CD4-positive, alpha-beta memory T cell (primary cell): ENCODE measurements at regions of chr20 and their contacts with region 1.

Region 1: DNA sequence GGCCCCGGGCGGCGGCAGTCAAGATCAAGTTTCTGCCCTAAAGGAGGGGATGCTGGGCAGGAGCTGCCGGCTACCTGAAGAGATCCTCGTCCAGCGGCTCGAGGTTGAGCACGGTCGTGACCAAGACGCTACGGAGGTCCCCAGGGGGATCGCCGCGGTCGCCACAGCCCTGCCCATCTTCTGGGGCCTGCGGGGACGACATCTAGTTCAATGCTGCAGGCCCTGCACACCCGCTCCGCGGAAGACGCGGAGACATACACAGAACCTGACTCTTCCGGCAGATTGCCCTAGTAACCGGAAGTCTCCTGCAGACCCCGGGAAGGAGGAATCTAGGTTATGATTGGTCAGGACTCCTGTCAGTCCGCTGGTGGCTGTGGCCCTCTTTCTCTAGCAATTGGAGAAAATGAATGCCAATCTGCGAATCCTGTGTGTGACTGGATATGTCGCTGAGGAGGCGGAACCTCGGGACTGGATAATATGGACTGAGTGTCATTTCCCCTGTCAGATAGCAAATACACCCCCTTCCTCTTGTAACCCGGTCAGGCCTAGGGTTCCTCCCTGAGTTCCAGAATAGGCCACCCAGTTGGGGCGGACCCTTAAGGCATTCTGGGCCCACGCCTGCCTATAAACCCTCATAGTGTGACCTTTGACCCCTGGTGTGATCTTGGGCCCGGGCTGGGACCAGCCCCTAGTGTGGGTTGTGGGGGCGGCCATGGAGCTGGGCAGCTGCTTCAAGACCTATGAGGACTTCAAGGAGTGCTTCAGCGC is at the starts of genes ACOT8 and ZSWIM3:
- DNase-seq: peak; percentile 97 to 99 (median 99)
- H3K4me3 ChIP-seq: peak within 1 kb of the TSS; percentile 73 to 78
- H3K4me3 Mint-ChIP-seq: peak within 1 kb of the TSS; percentile 86 to 98 (median 95)
- H3K27ac ChIP-seq: peak within 1 kb of the TSS; percentile 76
- H3K27ac Mint-ChIP-seq: peak within 1 kb of the TSS; percentile 84 to 99 (median 98)
- H3K4me1 ChIP-seq: peaks cover 35% of the 10 kb centered on the region
- H3K4me1 Mint-ChIP-seq: peaks cover 25 to 66% (median 39%) of the 10 kb centered on the region in 4 donors
- H3K27me3 ChIP-seq: no peaks in the 10 kb centered on the region
- H3K27me3 Mint-ChIP-seq: no peaks in the 10 kb centered on the region
- total RNA-seq, gene ACOT8: 30.6 to 33.4 TPM
- total RNA-seq, gene ZSWIM3: 6.7 to 7.1 TPM

Region 2: DNA sequence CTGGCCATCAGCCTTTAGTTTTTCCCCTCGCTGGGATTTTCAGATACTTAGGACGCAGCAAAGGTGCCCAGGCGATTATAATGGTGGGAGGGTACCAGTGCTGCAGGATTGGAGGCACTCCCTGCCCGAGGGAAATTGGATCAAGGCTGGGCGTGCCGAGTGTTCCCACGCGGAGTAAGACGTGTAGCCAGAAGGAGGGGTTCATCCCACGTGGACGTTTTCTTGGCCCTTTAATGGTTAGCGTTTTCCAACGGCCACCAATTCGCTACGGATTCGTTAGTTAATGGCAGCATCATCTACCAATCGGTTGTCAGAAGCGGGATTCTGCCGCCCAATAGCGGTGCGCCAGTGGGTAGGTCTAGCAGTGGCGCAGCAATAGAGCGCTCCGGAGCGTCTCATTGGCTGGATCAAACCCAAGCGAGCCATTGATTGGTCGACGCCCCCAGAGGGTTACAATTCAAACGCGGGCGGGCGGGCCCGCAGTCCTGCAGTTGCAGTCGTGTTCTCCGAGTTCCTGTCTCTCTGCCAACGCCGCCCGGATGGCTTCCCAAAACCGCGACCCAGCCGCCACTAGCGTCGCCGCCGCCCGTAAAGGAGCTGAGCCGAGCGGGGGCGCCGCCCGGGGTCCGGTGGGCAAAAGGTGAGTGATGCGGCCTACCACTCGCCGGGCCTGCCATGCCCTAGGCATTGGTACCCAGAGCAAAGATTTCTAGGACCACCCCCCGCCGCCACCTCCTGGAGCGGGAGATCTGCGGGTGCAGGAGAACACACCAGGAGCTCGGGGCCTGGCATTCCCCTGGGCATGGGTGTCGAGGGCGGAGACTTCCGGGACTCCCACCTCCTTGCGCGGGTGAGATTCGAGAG is 44.9 kb before region 1 on chr20 and contains the start of gene UBE2C:
- CTCF ChIA-PET with region 1: no interaction called
- POLR2A ChIA-PET with region 1: interaction called, 4 read pairs
- intact Hi-C with region 1: loop called (anchors 1 kb)
- DNase-seq: peak; percentile 92 to 96 (median 94)
- H3K4me3 ChIP-seq: peak within 1 kb of the TSS; percentile 37 to 68
- H3K4me3 Mint-ChIP-seq: peak within 1 kb of the TSS; percentile 82 to 92 (median 86)
- H3K27ac ChIP-seq: peak within 1 kb of the TSS; percentile 44
- H3K27ac Mint-ChIP-seq: peak within 1 kb of the TSS; percentile 53 to 89 (median 70)
- H3K4me1 ChIP-seq: peaks cover 15% of the 10 kb centered on the region
- H3K4me1 Mint-ChIP-seq: peaks cover 7 to 23% (median 14%) of the 10 kb centered on the region in 4 donors
- H3K27me3 ChIP-seq: no peaks in the 10 kb centered on the region
- H3K27me3 Mint-ChIP-seq: no peaks in the 10 kb centered on the region
- total RNA-seq, gene UBE2C: 0.55 to 0.61 TPM

Region 3: GRCh38 chr20:45823949-45824835 is 33.1 kb before region 1 on chr20:
- CTCF ChIA-PET with region 1: interaction called, 3 read pairs
- POLR2A ChIA-PET with region 1: interaction called, 5 read pairs
- intact Hi-C with region 1: loop called (anchors 1 kb)
- DNase-seq: peak; percentile 37 to 58 (median 47)
- H3K4me3 ChIP-seq: peak overlapping the region in 1 of 2 donors; percentile 46
- H3K4me3 Mint-ChIP-seq: peak overlapping the region; percentile 64 to 84 (median 80)
- H3K27ac ChIP-seq: no peak overlapping the region
- H3K27ac Mint-ChIP-seq: peak overlapping the region in 6 of 7 donors; percentile 2 to 86 (median 66)
- H3K4me1 ChIP-seq: peaks cover 7% of the 10 kb centered on the region
- H3K4me1 Mint-ChIP-seq: peaks cover 7 to 22% (median 15%) of the 10 kb centered on the region in 4 donors
- H3K27me3 ChIP-seq: no peaks in the 10 kb centered on the region
- H3K27me3 Mint-ChIP-seq: peaks cover 6 to 19% of the 10 kb centered on the region in 2 donors

Region 4: GRCh38 chr20:45880988-45881788 is 23.9 kb after region 1 on chr20 and contains the start of gene ZSWIM1:
- CTCF ChIA-PET with region 1: interaction called, 6 read pairs
- POLR2A ChIA-PET with region 1: interaction called, 57 read pairs
- intact Hi-C with region 1: loop called (anchors 1 kb)
- DNase-seq: peak; percentile 97 to 99 (median 97)
- H3K4me3 ChIP-seq: peak within 1 kb of the TSS; percentile 68 to 99
- H3K4me3 Mint-ChIP-seq: peak within 1 kb of the TSS; percentile 82 to 94 (median 90)
- H3K27ac ChIP-seq: peak within 1 kb of the TSS; percentile 65
- H3K27ac Mint-ChIP-seq: peak within 1 kb of the TSS; percentile 83 to 97 (median 95)
- H3K4me1 ChIP-seq: peaks cover 44% of the 10 kb centered on the region
- H3K4me1 Mint-ChIP-seq: peaks cover 30 to 47% (median 37%) of the 10 kb centered on the region in 4 donors
- H3K27me3 ChIP-seq: no peaks in the 10 kb centered on the region
- H3K27me3 Mint-ChIP-seq: no peaks in the 10 kb centered on the region
- total RNA-seq, gene ZSWIM1: 18.2 to 18.5 TPM